T-cell (primary cell): ENCODE measurements at regions of chr17 and their contacts with region 1.

Region 1: DNA sequence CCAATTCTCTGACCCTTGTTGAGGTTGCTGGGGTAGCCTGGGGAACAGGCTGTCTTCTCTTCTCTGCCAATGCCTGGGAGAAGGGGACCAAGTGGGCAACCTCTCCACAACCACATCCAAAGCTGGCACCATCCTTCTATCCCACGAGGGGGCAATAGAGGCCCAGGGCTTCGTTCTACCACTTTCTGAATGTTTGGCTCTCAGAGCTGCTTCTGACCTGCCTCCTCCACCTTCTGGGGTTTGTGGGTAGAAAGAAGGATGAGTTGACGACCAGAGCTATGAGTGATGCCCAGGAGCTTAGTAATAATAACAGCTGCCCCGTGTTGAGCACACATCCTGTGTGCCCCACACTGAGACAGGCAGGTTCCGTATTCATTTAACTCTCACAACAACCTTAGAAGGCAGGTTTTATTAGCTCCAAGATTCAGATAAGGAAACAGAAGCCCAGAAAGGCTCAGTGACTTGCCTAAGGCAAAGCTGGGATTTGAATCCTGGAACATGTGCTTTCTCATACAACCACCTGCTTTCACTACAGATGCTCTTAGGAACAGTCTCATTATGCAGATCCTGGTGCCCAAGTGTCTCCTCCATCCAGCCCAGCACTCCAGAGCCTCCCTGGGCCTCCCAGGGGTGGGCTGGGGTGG is 11.1 kb downstream of the TSPOAP1 start:
- DNase-seq: peak; percentile 48 to 88 (median 68)
- ATAC-seq: peak; percentile 88 to 93 (median 92)
- H3K4me3 ChIP-seq: no peak overlapping the region
- H3K4me3 Mint-ChIP-seq: peak overlapping the region in 1 of 3 donors; percentile 17
- H3K27ac ChIP-seq: peak overlapping the region; percentile 73
- H3K27ac Mint-ChIP-seq: peak overlapping the region; percentile 93 to 95
- H3K4me1 ChIP-seq: peaks cover 3 to 22% of the 10 kb centered on the region in 2 experiments
- H3K4me1 Mint-ChIP-seq: peaks cover 12 to 20% (median 15%) of the 10 kb centered on the region in 3 donors
- H3K27me3 ChIP-seq: no peaks in the 10 kb centered on the region
- H3K27me3 Mint-ChIP-seq: no peaks in the 10 kb centered on the region

Region 2: GRCh38 chr17:58329035-58329809 is 11.7 kb after region 1 on chr17:
- CTCF ChIA-PET with region 1: interaction called, 7 to 22 read pairs
- POLR2A ChIA-PET with region 1: interaction called, 6 read pairs
- DNase-seq: peak; percentile 49 to 80 (median 62)
- ATAC-seq: peak; percentile 11 to 41 (median 22)
- H3K4me3 ChIP-seq: peak overlapping the region; percentile 57 to 90
- H3K4me3 Mint-ChIP-seq: peak overlapping the region; percentile 99 to 100 (median 100)
- H3K27ac ChIP-seq: peak overlapping the region; percentile 50
- H3K27ac Mint-ChIP-seq: peak overlapping the region; percentile 93 to 96
- H3K4me1 ChIP-seq: peaks cover 13 to 67% of the 10 kb centered on the region in 2 experiments
- H3K4me1 Mint-ChIP-seq: peaks cover 50 to 72% (median 55%) of the 10 kb centered on the region in 3 donors
- H3K27me3 ChIP-seq: no peaks in the 10 kb centered on the region
- H3K27me3 Mint-ChIP-seq: no peaks in the 10 kb centered on the region

Region 3: DNA sequence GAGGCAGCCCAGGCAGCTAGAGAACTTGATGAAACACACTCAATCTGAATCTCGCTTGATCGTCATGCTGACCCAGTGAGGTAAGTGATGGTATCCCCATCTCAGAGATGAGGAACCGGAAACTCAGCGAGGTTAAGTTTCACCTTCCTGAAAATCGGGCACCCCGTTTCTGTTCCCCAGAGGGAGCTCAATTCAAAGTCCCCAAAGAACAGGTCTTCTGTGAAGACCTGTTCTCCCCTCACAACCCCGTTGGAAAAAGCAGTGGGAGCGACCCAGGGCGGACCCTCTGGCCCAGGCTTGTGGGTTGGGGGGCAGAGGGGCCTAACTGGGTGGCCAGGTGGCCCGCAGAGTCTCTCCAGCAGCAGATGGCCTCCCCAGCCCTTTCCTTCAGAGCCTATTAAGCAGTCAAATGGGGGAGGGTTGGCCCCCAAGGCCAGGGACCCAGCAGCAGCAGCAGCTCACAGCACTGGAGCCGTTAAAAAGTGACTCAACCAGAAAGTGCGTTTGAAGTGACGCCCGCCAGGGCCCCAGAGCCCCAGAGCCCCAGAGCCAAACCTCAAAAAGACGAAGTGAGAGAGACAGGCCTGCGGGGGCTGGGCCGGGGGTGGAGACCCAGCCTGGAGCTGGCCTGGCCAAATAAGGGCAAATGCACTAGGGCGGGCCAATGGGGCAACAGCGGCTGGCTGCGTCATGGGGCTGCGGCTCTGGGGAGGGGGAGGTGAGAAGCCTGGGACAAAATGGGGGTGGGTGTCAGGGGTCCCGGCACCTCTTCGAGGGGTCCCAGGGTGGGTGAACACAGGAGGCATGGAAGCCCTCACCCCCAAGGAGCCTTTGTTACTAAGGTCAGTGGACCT is 20.3 kb after region 1 on chr17:
- CTCF ChIA-PET with region 1: interaction called, 5 to 191 read pairs
- POLR2A ChIA-PET with region 1: interaction called, 5 read pairs
- DNase-seq: peak; percentile 78 to 93 (median 88)
- ATAC-seq: peak; percentile 64 to 78 (median 68)
- H3K4me3 ChIP-seq: peak overlapping the region; percentile 90 to 100
- H3K4me3 Mint-ChIP-seq: peak overlapping the region; percentile 99 to 100 (median 100)
- H3K27ac ChIP-seq: peak overlapping the region; percentile 97
- H3K27ac Mint-ChIP-seq: peak overlapping the region; percentile 98 to 99
- H3K4me1 ChIP-seq: peaks cover 47 to 97% of the 10 kb centered on the region in 2 experiments
- H3K4me1 Mint-ChIP-seq: peaks cover 81 to 94% (median 90%) of the 10 kb centered on the region in 3 donors
- H3K27me3 ChIP-seq: no peaks in the 10 kb centered on the region
- H3K27me3 Mint-ChIP-seq: no peaks in the 10 kb centered on the region

Region 4: DNA sequence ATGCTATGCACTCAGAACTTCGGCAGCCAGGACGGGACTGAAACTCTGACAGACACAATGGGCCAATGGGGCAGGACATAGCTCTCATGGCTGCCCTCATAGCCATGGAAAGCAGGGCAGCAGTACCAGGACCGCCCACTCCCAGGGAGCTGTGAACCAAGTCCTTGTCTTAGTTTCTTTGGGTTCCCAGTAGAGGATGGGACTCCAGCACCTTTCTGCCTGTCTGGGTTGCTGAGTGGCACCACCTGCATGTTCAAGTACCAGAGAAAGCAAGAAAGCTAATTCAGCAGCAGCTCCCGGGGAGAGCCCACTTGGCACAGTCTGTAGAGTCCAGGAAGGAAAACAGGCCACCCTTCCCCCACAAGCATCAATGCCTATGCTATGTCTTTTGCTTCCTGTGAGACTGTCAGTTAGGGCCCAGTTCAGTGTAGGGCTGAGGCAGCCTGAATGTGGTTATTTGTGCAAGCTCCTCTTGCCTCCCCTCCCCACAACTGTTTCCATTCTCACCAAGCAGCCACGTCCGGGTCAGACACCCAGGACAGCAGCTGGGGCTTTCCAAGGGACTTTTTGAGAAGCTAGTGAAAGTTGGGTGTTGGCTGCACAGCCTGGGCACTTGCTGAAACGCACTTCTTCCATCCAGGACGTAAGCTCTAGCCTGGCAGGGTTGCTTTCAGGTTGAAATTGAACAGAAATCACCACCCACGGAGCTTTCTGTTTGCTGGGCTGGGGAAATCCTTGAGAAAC is 26.7 kb after region 1 on chr17:
- CTCF ChIA-PET with region 1: interaction called, 48 to 191 read pairs
- POLR2A ChIA-PET with region 1: interaction called, 9 to 25 read pairs
- DNase-seq: peak; percentile 56 to 95 (median 85)
- ATAC-seq: peak; percentile 76 to 83 (median 80)
- H3K4me3 ChIP-seq: peak overlapping the region; percentile 55 to 59
- H3K4me3 Mint-ChIP-seq: peak overlapping the region; percentile 84 to 100 (median 100)
- H3K27ac ChIP-seq: peak overlapping the region; percentile 97
- H3K27ac Mint-ChIP-seq: peak overlapping the region; percentile 98 to 99
- H3K4me1 ChIP-seq: peaks cover 69 to 84% of the 10 kb centered on the region in 2 experiments
- H3K4me1 Mint-ChIP-seq: peaks cover 91 to 98% (median 94%) of the 10 kb centered on the region in 3 donors
- H3K27me3 ChIP-seq: no peaks in the 10 kb centered on the region
- H3K27me3 Mint-ChIP-seq: no peaks in the 10 kb centered on the region

Region 5: GRCh38 chr17:58352014-58352842 is 34.7 kb after region 1 on chr17 and contains the start of gene SUPT4H1:
- CTCF ChIA-PET with region 1: interaction called, 48 to 191 read pairs
- POLR2A ChIA-PET with region 1: interaction called in 1 of 2 experiments, 10 read pairs
- DNase-seq: peak; percentile 81 to 94 (median 88)
- ATAC-seq: peak; percentile 92 to 96 (median 94)
- H3K4me3 ChIP-seq: peak within 1 kb of the TSS; percentile 83 to 95
- H3K4me3 Mint-ChIP-seq: peak within 1 kb of the TSS; percentile 99 to 100 (median 100)
- H3K27ac ChIP-seq: peak within 1 kb of the TSS; percentile 77
- H3K27ac Mint-ChIP-seq: peak within 1 kb of the TSS; percentile 100
- H3K4me1 ChIP-seq: peaks cover 24 to 35% of the 10 kb centered on the region in 2 experiments
- H3K4me1 Mint-ChIP-seq: peaks cover 54 to 63% (median 59%) of the 10 kb centered on the region in 3 donors
- H3K27me3 ChIP-seq: no peaks in the 10 kb centered on the region
- H3K27me3 Mint-ChIP-seq: no peaks in the 10 kb centered on the region
- total RNA-seq, gene SUPT4H1: 40.5 to 77.3 (median 63.2) TPM

Region 6: GRCh38 chr17:58417300-58418092 is 100.0 kb after region 1 on chr17 and contains the start of gene RNF43:
- CTCF ChIA-PET with region 1: interaction called, 11 to 57 read pairs
- POLR2A ChIA-PET with region 1: no interaction called
- DNase-seq: peak; percentile 58 to 95 (median 90)
- ATAC-seq: peak; percentile 100
- H3K4me3 ChIP-seq: no peak within 1 kb of the TSS
- H3K4me3 Mint-ChIP-seq: peak within 1 kb of the TSS in 1 of 3 donors; percentile 18
- H3K27ac ChIP-seq: peak within 1 kb of the TSS; percentile 53
- H3K27ac Mint-ChIP-seq: peak within 1 kb of the TSS; percentile 36 to 57
- H3K4me1 ChIP-seq: peaks cover 8 to 12% of the 10 kb centered on the region in 2 experiments
- H3K4me1 Mint-ChIP-seq: peaks cover 13 to 17% (median 16%) of the 10 kb centered on the region in 3 donors
- H3K27me3 ChIP-seq: no peaks in the 10 kb centered on the region
- H3K27me3 Mint-ChIP-seq: no peaks in the 10 kb centered on the region
- total RNA-seq, gene RNF43: 1.2 to 4.0 (median 1.8) TPM

Region 7: DNA sequence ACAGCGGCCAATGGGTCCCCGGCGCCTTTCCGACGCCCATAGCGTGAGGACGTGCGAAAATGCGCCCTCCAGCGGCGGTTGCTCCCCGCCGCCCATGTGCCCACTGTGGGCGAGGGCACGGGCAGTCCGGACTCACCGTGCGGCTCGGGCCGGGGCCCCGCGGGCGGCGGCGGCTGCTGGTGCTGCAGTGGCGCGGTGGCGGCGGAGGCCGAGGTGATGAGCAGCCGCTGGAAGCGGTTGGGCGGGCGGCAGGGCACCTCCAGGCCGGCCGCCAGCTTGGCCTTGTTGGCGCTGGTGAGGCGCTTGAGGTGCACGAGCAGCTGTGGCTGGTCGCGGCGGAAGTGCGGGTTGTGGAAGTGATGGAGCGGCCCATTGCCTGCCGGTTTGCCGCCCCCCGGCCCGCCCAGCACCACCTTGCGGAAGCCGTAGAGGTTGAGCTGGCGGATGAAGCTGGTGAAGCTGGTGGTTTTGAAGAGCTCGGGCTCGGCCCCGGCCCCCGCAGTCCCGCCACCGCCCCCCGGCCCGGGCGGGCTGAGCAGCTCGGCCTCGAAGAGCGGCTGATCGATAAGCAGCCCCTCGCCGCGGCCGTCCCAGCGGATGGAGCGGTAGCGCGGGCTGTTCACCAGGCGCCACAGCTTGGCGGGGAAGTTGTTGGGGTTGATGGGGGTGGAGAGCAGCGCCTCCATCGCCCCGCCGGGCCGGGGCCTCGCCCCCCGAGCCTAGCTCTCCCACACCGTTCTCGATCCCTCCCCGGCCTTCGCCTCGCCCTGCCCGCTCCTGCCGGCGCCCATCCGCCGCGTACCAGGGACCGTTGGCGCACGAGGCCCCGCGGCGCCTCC is 170.3 kb after region 1 on chr17 and contains the start of gene HSF5:
- CTCF ChIA-PET with region 1: interaction called in 1 of 2 experiments, 21 read pairs
- POLR2A ChIA-PET with region 1: no interaction called
- DNase-seq: peak; percentile 58 to 86 (median 74)
- ATAC-seq: peak; percentile 95 to 97 (median 96)
- H3K4me3 ChIP-seq: peak within 1 kb of the TSS; percentile 25 to 47
- H3K4me3 Mint-ChIP-seq: peak within 1 kb of the TSS; percentile 55 to 73 (median 64)
- H3K27ac ChIP-seq: peak within 1 kb of the TSS; percentile 3
- H3K27ac Mint-ChIP-seq: peak within 1 kb of the TSS; percentile 49 to 75
- H3K4me1 ChIP-seq: peaks cover 0 to 11% of the 10 kb centered on the region in 2 experiments
- H3K4me1 Mint-ChIP-seq: peaks cover 0 to 20% (median 18%) of the 10 kb centered on the region in 3 donors
- H3K27me3 ChIP-seq: no peaks in the 10 kb centered on the region
- H3K27me3 Mint-ChIP-seq: no peaks in the 10 kb centered on the region
- total RNA-seq, gene HSF5: 1.7 to 2.8 (median 2.5) TPM